ENCODE measurements at regions of chr14 and their contacts with region 1.

Region 1: GRCh38 chr14:86543521-86543920 is 1013.6 kb downstream of the FLRT2 start:
- DNase-seq: no peak
- H3K4me3 ChIP-seq: no peak overlapping the region
- H3K27me3 ChIP-seq: no peaks in the 10 kb centered on the region
- CTCF ChIP-seq: no peak

Region 2: GRCh38 chr14:86739761-86740160 is 196.2 kb after region 1 on chr14:
- CTCF ChIA-PET with region 1: no interaction called
- POLR2A ChIA-PET with region 1: interaction called, 12 read pairs
- DNase-seq: no peak
- H3K4me3 ChIP-seq: no peak overlapping the region
- H3K27me3 ChIP-seq: no peaks in the 10 kb centered on the region
- CTCF ChIP-seq: no peak

Region 3: GRCh38 chr14:86815341-86815740 is 271.8 kb after region 1 on chr14:
- CTCF ChIA-PET with region 1: no interaction called
- POLR2A ChIA-PET with region 1: no interaction called
- DNase-seq: no peak
- H3K4me3 ChIP-seq: no peak overlapping the region
- H3K27me3 ChIP-seq: no peaks in the 10 kb centered on the region
- CTCF ChIP-seq: no peak

Measured in BJ (cell line).